A549 (cell line): ENCODE measurements at regions of chr2 and their contacts with region 1.

Region 1: GRCh38 chr2:237731663-237732062 is 66.9 kb upstream of the RBM44 start:
- DNase-seq: peak; percentile 74 to 79
- ATAC-seq: peak; percentile 82 to 88
- H3K4me3 ChIP-seq: no peak overlapping the region
- H3K27ac ChIP-seq: peak overlapping the region; percentile 51 to 84
- H3K4me1 ChIP-seq: peaks cover 70% of the 10 kb centered on the region
- CTCF ChIP-seq: no peak
- EP300 ChIP-seq: no peak
- POLR2A ChIP-seq: no peak
- RAD21 ChIP-seq: no peak

Region 2: DNA sequence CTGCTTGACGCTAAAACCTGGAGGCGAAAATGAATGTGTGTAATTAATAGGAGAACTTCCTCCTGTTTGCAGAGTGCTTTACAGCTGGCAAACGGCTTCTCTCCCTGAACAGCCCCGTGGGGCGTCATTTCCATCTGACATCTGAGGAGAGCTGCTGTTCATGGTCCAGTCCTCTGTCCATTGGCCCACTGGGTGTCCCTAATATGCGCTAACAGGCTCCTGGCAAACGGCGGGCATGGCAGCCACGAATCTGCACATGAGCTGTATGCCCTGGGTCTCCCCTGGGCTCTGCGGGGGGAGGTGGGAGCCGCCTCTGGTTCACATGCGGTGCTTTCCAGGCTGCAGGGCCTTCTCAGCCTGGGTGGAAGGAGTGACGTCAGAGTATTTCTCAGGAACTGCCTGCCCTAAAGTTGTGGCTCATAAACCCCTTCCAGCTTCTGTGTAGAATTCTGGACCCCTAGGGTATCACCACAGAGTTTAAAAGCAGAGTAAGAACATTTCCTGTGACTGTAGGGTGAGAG is 31.1 kb before region 1 on chr2:
- CTCF ChIA-PET with region 1: interaction called, 11 read pairs
- POLR2A ChIA-PET with region 1: no interaction called
- DNase-seq: no peak
- ATAC-seq: no peak
- H3K4me3 ChIP-seq: no peak overlapping the region
- H3K27ac ChIP-seq: no peak overlapping the region
- H3K4me1 ChIP-seq: peaks cover 67% of the 10 kb centered on the region
- CTCF ChIP-seq: no peak
- EP300 ChIP-seq: no peak
- POLR2A ChIP-seq: no peak
- RAD21 ChIP-seq: no peak

Region 3: DNA sequence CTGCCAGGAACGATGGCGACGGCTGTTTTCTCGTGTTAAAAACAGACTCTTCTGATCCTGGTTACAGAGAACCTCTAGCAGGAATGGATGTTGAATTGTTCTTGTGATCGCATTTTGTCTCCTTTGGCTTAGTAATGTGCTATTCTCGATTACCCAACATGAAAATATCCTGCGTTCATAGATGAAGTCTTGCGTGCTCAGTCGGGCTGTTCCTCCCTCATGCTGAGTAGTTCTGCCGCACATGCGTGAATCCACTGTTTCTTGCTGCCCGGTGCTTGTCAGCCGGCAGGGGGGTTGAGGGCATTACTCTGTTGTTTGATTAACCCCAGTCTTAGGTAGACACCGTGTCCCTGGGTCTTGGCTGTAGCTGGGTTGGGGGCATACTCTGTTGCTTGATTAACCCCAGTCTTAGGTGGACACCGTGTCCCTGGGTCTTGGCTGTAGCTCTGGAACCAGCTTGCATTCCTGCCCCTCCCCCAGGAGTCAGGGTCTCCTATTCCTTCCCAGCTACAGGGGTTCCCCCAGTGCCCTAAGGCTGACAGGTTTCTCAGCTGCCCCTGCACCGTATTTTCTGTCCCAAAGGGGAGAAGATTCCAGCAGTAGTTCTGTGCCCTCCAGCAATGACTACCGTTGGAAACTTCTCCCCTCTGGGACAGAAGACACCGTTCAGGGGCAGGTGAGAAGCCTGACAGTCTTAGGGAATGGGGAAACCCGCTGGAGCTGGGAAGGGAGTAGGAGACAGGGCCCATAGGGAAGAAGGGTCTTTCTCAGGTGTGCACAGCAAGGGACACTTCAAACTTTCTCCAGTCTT is 672.9 kb after region 1 on chr2:
- CTCF ChIA-PET with region 1: no interaction called
- POLR2A ChIA-PET with region 1: no interaction called
- DNase-seq: no peak
- ATAC-seq: no peak
- H3K4me3 ChIP-seq: no peak overlapping the region
- H3K27ac ChIP-seq: no peak overlapping the region
- H3K4me1 ChIP-seq: no peaks in the 10 kb centered on the region
- CTCF ChIP-seq: no peak
- EP300 ChIP-seq: no peak
- POLR2A ChIP-seq: no peak
- RAD21 ChIP-seq: no peak